Activated T-helper 1 cell treated with anti-CD3 and anti-CD28 coated beads, Interleukin-12 subunit alpha, Interleukin-12 subunit beta, Interleukin-2, Interleukin-4 antibody, amounts not matched to agents 30 ng/mL and 10 ng/mL and 1 ng/mL, durations not matched to agents 14 hours and 24 hours and 36 hours (primary cell): ENCODE measurements at regions of chr13 and their contacts with region 1.

Region 1: DNA sequence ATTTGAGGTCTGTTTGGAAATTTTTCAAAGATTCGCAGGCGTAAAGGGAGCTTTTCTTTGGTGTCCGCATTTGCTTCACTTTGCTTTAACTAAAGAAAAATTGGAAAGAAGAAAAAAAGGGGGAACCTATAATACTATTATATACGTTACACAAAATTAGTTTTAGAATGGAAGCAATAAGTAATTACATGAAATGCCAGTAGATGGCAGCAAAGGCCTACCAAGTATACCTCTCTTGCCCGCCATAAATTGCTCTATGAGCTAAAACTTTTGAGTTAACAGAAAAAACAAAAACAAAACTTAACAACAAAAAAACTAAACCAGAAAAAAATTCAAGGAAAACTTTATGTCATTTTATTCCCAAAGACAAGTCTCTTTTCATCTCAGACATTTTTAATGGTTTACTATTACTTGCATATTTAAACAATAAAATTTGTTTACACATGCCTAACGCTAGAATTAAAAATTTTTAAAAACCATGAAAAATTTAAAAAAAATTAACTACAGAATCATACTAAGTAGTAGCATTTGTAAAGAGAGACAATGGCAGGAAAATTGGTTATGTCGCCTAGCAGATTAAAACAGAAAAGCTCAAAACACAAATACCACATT is 271.4 kb downstream of the NALCN start:
- DNase-seq: no peak
- H3K4me3 Mint-ChIP-seq: no peak overlapping the region
- H3K27ac Mint-ChIP-seq: no peak overlapping the region
- H3K4me1 Mint-ChIP-seq: no peaks in the 10 kb centered on the region
- H3K27me3 Mint-ChIP-seq: peaks cover 8% of the 10 kb centered on the region

Region 2: GRCh38 chr13:100976993-100977392 is 167.9 kb before region 1 on chr13:
- intact Hi-C with region 1: no loop called
- DNase-seq: no peak
- H3K4me3 Mint-ChIP-seq: no peak overlapping the region
- H3K27ac Mint-ChIP-seq: no peak overlapping the region
- H3K4me1 Mint-ChIP-seq: no peaks in the 10 kb centered on the region
- H3K27me3 Mint-ChIP-seq: no peaks in the 10 kb centered on the region

Region 3: GRCh38 chr13:101514788-101515187 is 369.9 kb after region 1 on chr13:
- intact Hi-C with region 1: loop called (anchors 1 kb)
- DNase-seq: no peak
- H3K4me3 Mint-ChIP-seq: no peak overlapping the region
- H3K27ac Mint-ChIP-seq: no peak overlapping the region
- H3K4me1 Mint-ChIP-seq: peaks cover 2% of the 10 kb centered on the region
- H3K27me3 Mint-ChIP-seq: peaks cover 4% of the 10 kb centered on the region

Region 4: DNA sequence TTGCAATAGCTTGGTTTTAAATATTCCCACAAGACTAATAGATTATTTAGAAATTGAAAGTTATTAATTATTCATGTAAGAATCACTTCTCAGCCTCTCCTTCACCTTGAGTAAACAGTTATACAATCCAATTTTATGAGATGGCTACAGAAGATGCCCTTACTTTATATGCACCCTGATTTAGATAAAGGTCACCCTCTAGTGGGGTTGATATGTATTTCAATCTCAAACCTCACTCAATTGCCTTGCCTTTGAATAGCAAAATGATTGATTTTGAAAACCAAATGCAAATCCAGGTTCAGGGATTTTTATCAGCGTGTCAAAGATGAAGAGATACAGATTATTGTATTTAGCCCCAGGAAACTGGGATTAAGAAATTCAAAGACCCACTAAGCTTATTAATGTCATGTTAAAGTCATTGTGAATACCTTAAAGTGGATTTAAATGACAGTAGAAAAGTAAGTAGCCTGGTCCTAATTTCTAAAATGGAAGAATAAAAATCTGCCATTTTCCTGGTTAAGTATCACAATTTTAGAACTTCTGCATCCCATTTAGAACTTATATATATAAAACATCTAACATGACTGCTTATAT is 612.6 kb after region 1 on chr13:
- intact Hi-C with region 1: loop called (anchors 1 kb)
- DNase-seq: no peak
- H3K4me3 Mint-ChIP-seq: no peak overlapping the region
- H3K27ac Mint-ChIP-seq: no peak overlapping the region
- H3K4me1 Mint-ChIP-seq: no peaks in the 10 kb centered on the region
- H3K27me3 Mint-ChIP-seq: no peaks in the 10 kb centered on the region

Region 5: DNA sequence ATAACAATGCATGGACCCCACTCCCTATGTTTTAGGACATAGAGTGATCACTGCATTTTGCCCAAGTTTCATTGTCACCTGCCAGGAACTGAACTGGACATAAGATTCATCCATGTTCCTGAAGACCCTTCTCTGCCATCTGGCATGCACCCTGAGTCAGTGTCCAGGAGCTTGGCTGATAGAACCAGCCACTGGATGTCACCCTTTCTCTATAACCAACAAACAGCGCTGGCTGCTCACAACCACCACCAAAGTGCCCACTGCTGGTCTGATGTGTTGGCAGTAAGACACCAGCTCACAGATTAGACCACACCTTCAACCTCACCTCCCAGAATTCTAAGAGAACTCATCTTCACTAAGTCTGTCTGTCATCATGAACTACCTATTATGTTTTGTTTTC is 640.9 kb after region 1 on chr13:
- intact Hi-C with region 1: no loop called
- DNase-seq: no peak
- H3K4me3 Mint-ChIP-seq: no peak overlapping the region
- H3K27ac Mint-ChIP-seq: no peak overlapping the region
- H3K4me1 Mint-ChIP-seq: no peaks in the 10 kb centered on the region
- H3K27me3 Mint-ChIP-seq: no peaks in the 10 kb centered on the region

Region 6: DNA sequence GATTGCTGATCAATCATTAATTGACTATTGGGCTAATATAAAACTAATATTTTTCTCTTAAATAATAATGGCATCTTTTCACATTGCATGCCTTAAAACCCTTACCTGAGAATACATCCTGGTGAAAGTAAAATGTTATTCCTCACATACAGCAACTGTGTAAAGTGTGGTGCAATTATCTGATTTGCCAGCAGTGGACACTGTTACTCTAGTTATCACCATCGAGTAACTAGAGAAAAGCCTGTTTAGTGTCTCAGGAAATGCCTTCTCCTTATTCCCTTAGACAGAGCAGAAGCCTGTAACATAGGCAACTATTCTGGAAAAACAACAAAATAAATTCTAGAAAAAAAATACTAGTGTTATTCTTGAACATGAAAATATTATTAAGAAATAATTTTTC is 797.1 kb after region 1 on chr13:
- intact Hi-C with region 1: loop called (anchors 2 kb)
- DNase-seq: no peak
- H3K4me3 Mint-ChIP-seq: no peak overlapping the region
- H3K27ac Mint-ChIP-seq: no peak overlapping the region
- H3K4me1 Mint-ChIP-seq: no peaks in the 10 kb centered on the region
- H3K27me3 Mint-ChIP-seq: no peaks in the 10 kb centered on the region

Region 7: DNA sequence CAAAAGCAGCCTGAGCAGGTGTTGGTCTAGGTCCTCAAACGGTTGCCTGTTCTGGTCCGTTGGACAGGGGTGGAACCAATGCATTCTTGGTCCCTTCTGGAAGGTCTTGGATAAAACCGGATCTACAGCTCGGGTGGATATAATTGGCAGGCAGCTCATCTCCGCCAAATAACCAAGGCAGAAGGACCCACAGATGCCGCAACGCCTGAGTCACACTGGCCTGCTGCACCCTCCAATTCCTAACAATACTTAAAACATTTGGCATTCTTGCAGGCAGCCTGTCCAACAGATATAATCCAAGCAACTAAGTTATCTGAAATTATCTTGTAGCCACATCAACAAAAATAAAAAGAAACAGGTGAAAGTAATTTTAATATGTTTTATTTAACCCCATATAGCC is 1315.9 kb after region 1 on chr13:
- intact Hi-C with region 1: loop called (anchors 1 kb)
- DNase-seq: no peak
- H3K4me3 Mint-ChIP-seq: no peak overlapping the region
- H3K27ac Mint-ChIP-seq: no peak overlapping the region
- H3K4me1 Mint-ChIP-seq: peaks cover 5% of the 10 kb centered on the region
- H3K27me3 Mint-ChIP-seq: peaks cover 5% of the 10 kb centered on the region

Region 8: GRCh38 chr13:102555917-102556553 is 1411.1 kb after region 1 on chr13:
- intact Hi-C with region 1: loop called (anchors 1 kb)
- DNase-seq: no peak
- H3K4me3 Mint-ChIP-seq: no peak overlapping the region
- H3K27ac Mint-ChIP-seq: no peak overlapping the region
- H3K4me1 Mint-ChIP-seq: no peaks in the 10 kb centered on the region
- H3K27me3 Mint-ChIP-seq: peaks cover 9% of the 10 kb centered on the region